Right cardiac atrium (tissue), 5 donors: ENCODE measurements at regions of chr3 and their contacts with region 1.

Region 1: DNA sequence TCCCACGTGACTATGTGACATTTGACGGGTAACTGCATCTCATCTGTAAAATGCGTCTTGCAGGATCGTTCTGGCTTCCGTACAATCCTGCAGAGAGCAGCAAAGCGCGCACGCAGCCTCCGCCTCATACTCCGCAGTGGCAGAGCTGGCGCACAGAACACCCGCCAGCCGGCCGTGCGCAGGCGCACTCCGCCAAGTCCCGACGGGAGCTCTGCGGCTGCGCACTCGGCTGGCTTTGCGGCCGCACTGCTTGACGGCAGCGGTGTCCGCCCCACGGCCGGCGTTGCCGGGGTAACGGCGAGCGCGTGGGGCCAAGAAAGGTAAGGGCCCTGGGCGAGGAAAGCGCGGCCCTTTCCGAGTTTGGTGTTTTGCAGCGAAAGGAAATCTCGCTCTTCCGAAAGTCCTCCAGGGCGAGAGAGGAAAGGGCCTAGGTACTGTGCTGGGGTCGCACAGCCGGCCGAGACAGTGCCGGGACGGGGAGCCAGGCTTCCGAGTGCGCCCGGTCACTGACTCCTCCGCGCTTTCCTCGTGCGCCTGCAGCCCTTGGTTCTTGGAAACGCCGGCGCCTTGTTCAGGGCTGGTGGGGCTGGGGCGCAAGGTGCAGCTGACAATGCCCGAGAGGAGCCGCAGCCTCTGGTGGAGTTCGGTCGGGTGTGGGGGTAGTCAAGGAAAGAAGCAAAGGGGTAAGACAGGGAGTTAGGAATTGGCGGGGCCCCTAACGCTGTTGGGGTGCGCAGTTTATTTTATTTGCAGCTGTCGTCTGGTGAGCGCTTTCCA is at the start of gene TSEN2:
- DNase-seq: peak; percentile 94 to 98 (median 98)
- ATAC-seq: peak; percentile 95 to 96
- H3K4me3 ChIP-seq: peak within 1 kb of the TSS; percentile 88
- H3K27ac ChIP-seq: peak within 1 kb of the TSS; percentile 81
- H3K4me1 ChIP-seq: peaks cover 7% of the 10 kb centered on the region
- H3K27me3 ChIP-seq: no peaks in the 10 kb centered on the region
- total RNA-seq, gene TSEN2: 13.9 to 21.4 (median 20.0) TPM

Region 2: GRCh38 chr3:12135029-12135657 is 349.2 kb before region 1 on chr3:
- intact Hi-C with region 1: loop called (anchors 2 to 5 kb)
- DNase-seq: peak; percentile 75 to 89 (median 89)
- ATAC-seq: peak; percentile 84 to 90
- H3K4me3 ChIP-seq: no peak overlapping the region
- H3K27ac ChIP-seq: no peak overlapping the region
- H3K4me1 ChIP-seq: peaks cover 5% of the 10 kb centered on the region
- H3K27me3 ChIP-seq: no peaks in the 10 kb centered on the region

Region 3: GRCh38 chr3:12175844-12176453 is 308.4 kb before region 1 on chr3:
- intact Hi-C with region 1: loop called in 2 of 4 experiments (anchors 2 to 5 kb)
- DNase-seq: peak; percentile 68 to 89 (median 82)
- ATAC-seq: peak; percentile 84 to 85
- H3K4me3 ChIP-seq: no peak overlapping the region
- H3K27ac ChIP-seq: no peak overlapping the region
- H3K4me1 ChIP-seq: peaks cover 16% of the 10 kb centered on the region
- H3K27me3 ChIP-seq: no peaks in the 10 kb centered on the region

Region 4: GRCh38 chr3:12205171-12205570 is 279.2 kb before region 1 on chr3:
- intact Hi-C with region 1: no loop called
- DNase-seq: no peak
- ATAC-seq: no peak
- H3K4me3 ChIP-seq: no peak overlapping the region
- H3K27ac ChIP-seq: no peak overlapping the region
- H3K4me1 ChIP-seq: no peaks in the 10 kb centered on the region
- H3K27me3 ChIP-seq: no peaks in the 10 kb centered on the region

Region 5: DNA sequence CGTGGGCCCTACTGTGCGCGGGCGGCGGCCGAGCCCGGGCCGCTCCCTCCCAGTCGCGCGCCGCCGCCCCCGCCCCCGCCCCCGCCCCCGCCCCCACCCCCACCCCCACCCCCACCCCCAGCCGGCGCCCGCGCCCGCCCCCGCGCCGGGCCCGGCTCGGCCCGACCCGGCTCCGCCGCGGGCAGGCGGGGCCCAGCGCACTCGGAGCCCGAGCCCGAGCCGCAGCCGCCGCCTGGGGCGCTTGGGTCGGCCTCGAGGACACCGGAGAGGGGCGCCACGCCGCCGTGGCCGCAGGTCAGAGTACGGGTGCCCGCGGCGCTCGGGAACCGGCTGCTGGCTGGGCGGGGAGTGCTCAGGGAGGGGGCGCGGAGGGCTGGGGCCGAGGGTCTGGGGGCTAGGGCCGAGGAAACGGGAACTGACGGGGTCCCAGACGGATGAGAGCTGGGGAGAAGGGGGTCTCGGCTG is 196.6 kb before region 1 on chr3:
- intact Hi-C with region 1: loop called in 1 of 4 experiments (anchors 5 kb)
- DNase-seq: peak; percentile 58 to 84 (median 84)
- ATAC-seq: peak; percentile 89 to 93
- H3K4me3 ChIP-seq: peak overlapping the region; percentile 61
- H3K27ac ChIP-seq: peak overlapping the region; percentile 79
- H3K4me1 ChIP-seq: no peaks in the 10 kb centered on the region
- H3K27me3 ChIP-seq: no peaks in the 10 kb centered on the region

Region 6: DNA sequence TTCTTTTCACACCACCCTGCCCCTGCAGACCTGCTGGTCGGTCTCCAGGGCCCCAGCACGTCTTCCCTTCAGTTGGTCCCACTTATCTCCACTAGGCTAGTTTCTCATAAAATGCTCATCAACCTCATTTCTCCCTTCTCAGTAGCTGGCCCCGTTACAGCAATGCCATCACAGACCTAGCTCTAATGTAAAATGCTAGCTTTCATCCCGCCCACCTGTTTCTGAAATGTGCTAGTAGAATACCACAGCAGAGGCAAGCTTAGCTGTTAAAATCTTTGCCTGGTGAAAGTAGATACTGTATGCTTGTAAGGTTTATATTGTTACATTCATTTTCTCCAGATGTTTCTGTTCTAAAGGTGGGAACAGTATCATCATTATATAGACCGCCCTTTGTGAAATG is 47.8 kb after region 1 on chr3:
- intact Hi-C with region 1: no loop called
- DNase-seq: no peak
- ATAC-seq: no peak
- H3K4me3 ChIP-seq: no peak overlapping the region
- H3K27ac ChIP-seq: no peak overlapping the region
- H3K4me1 ChIP-seq: no peaks in the 10 kb centered on the region
- H3K27me3 ChIP-seq: no peaks in the 10 kb centered on the region